T-cell (primary cell): ENCODE measurements at regions of chr3 and their contacts with region 1.

Region 1: GRCh38 chr3:39288300-39288808 is 8.5 kb upstream of the CX3CR1 start:
- DNase-seq: peak; percentile 51 to 89 (median 73)
- ATAC-seq: peak; percentile 88 to 96 (median 90)
- H3K4me3 ChIP-seq: no peak overlapping the region
- H3K4me3 Mint-ChIP-seq: no peak overlapping the region
- H3K27ac ChIP-seq: peak overlapping the region; percentile 6
- H3K27ac Mint-ChIP-seq: peak overlapping the region; percentile 50
- H3K4me1 ChIP-seq: peaks cover 0 to 20% of the 10 kb centered on the region in 2 experiments
- H3K4me1 Mint-ChIP-seq: peaks cover 23 to 35% (median 25%) of the 10 kb centered on the region in 3 donors
- H3K27me3 ChIP-seq: no peaks in the 10 kb centered on the region
- H3K27me3 Mint-ChIP-seq: no peaks in the 10 kb centered on the region

Region 2: GRCh38 chr3:39106281-39106811 is 182.0 kb before region 1 on chr3:
- CTCF ChIA-PET with region 1: interaction called, 5 to 10 read pairs
- POLR2A ChIA-PET with region 1: no interaction called
- DNase-seq: no peak
- ATAC-seq: no peak
- H3K4me3 ChIP-seq: peak overlapping the region; percentile 78 to 91
- H3K4me3 Mint-ChIP-seq: peak overlapping the region; percentile 82 to 95 (median 85)
- H3K27ac ChIP-seq: peak overlapping the region; percentile 48
- H3K27ac Mint-ChIP-seq: peak overlapping the region; percentile 88 to 92
- H3K4me1 ChIP-seq: peaks cover 7 to 38% of the 10 kb centered on the region in 2 experiments
- H3K4me1 Mint-ChIP-seq: peaks cover 60 to 71% (median 65%) of the 10 kb centered on the region in 3 donors
- H3K27me3 ChIP-seq: no peaks in the 10 kb centered on the region
- H3K27me3 Mint-ChIP-seq: no peaks in the 10 kb centered on the region

Region 3: DNA sequence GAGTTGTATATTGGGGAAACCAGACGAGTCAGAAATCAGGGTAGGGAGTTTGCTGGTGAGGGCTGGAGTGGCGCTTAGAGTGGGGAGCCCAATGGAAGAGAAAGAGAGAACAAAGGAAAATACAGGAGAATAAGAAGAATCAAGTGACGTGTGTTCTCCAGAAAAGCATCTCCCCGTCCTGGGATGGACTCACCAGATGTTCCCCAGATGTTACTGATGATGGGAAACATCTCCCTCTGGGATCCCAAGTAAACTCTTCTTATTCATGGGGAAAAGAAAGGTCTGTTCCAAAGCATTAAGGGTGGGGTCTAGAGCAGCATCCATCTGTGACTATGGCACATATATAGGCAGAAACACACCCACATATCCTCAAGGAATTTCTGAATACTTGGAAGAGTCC is 131.9 kb before region 1 on chr3:
- CTCF ChIA-PET with region 1: interaction called in 1 of 2 experiments, 4 read pairs
- POLR2A ChIA-PET with region 1: interaction called in 1 of 2 experiments, 10 read pairs
- DNase-seq: no peak
- ATAC-seq: no peak
- H3K4me3 ChIP-seq: no peak overlapping the region
- H3K4me3 Mint-ChIP-seq: no peak overlapping the region
- H3K27ac ChIP-seq: no peak overlapping the region
- H3K27ac Mint-ChIP-seq: no peak overlapping the region
- H3K4me1 ChIP-seq: peaks cover 9 to 28% of the 10 kb centered on the region in 2 experiments
- H3K4me1 Mint-ChIP-seq: peaks cover 25 to 32% (median 25%) of the 10 kb centered on the region in 3 donors
- H3K27me3 ChIP-seq: no peaks in the 10 kb centered on the region
- H3K27me3 Mint-ChIP-seq: no peaks in the 10 kb centered on the region

Region 4: DNA sequence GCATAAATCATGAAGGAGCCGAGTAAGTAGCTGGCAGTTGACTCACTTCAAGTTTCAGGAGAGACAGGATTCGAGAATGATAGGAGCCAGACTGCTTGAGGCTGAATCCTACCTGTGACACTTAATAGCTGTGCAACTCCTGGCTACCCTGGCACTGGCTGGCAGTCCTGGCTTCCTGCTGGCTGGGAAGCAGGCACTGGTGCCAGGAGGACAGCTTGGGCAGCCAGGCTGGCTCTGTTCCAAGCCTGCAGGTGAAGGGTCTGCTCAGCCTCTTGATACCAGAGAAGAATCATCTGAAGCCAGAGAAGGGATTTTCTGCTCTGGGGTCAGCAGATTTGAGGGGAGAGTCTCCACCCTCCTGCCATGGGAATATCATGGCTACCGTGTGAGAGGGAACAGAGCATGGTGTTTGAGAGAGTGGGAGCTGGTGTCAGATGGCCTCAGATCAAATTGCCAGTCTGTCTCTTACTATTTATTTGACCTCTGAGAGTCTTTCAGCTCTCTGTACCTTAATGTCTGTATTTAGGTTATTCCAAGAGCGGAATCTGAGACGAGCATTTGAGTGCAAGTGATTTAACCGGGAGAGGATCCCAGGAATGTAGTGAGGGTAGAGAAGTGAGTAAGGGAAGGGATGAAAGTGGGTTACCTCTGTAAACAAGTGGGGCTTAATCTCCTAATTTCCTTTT is 91.5 kb before region 1 on chr3:
- CTCF ChIA-PET with region 1: interaction called, 48 to 82 read pairs
- POLR2A ChIA-PET with region 1: no interaction called
- DNase-seq: no peak
- ATAC-seq: no peak
- H3K4me3 ChIP-seq: no peak overlapping the region
- H3K4me3 Mint-ChIP-seq: no peak overlapping the region
- H3K27ac ChIP-seq: no peak overlapping the region
- H3K27ac Mint-ChIP-seq: peak overlapping the region in 1 of 2 donors; percentile 20
- H3K4me1 ChIP-seq: peaks cover 0 to 2% of the 10 kb centered on the region in 2 experiments
- H3K4me1 Mint-ChIP-seq: no peaks in the 10 kb centered on the region
- H3K27me3 ChIP-seq: peaks cover 0 to 9% of the 10 kb centered on the region in 2 experiments
- H3K27me3 Mint-ChIP-seq: peaks cover 8 to 11% of the 10 kb centered on the region in 2 donors

Region 5: DNA sequence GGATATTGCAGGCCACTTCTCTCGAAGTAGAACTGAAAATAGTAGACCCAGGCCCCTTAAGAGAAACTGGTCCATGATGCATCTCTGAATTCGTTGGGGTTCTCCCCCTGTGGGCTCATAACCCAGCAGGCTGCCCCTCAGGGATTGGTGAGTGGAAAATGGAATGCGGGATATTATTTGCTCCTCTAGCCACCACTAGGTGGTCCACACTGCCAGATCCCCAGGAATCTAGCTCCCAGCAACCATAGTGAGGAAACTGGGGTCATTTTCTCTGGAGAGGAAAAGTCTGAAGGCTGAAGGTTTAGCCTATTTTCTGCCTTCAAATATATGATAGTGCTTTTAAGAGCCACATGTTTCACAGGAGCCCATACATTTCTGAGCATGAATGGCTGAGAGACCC is 15.2 kb before region 1 on chr3:
- CTCF ChIA-PET with region 1: interaction called, 10 to 18 read pairs
- POLR2A ChIA-PET with region 1: no interaction called
- DNase-seq: no peak
- ATAC-seq: no peak
- H3K4me3 ChIP-seq: no peak overlapping the region
- H3K4me3 Mint-ChIP-seq: no peak overlapping the region
- H3K27ac ChIP-seq: peak overlapping the region; percentile 27
- H3K27ac Mint-ChIP-seq: peak overlapping the region in 1 of 2 donors; percentile 46
- H3K4me1 ChIP-seq: peaks cover 2 to 66% of the 10 kb centered on the region in 2 experiments
- H3K4me1 Mint-ChIP-seq: peaks cover 13 to 49% (median 13%) of the 10 kb centered on the region in 3 donors
- H3K27me3 ChIP-seq: no peaks in the 10 kb centered on the region
- H3K27me3 Mint-ChIP-seq: no peaks in the 10 kb centered on the region

Region 6: DNA sequence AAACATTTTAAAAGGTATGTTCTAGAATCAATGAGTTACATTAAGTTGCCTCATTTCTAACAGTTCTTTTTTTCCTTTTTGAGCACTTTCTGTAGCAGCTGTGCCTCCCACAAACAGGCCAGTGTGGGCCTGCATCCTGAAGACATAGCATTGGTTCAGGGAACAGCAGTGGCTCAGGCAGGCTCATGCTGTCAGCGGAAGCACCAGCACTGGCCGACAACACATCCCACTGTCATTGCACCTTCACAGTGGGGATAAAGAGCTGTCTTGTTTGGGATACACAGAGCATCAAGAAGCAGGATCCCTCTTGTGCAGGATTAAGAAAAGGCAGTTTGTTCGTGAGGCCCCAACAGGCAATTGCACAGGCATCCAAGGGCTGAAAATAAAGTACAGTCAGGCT is 302.5 kb after region 1 on chr3:
- CTCF ChIA-PET with region 1: no interaction called
- POLR2A ChIA-PET with region 1: no interaction called
- DNase-seq: no peak
- ATAC-seq: no peak
- H3K4me3 ChIP-seq: no peak overlapping the region
- H3K4me3 Mint-ChIP-seq: no peak overlapping the region
- H3K27ac ChIP-seq: no peak overlapping the region
- H3K27ac Mint-ChIP-seq: no peak overlapping the region
- H3K4me1 ChIP-seq: no peaks in the 10 kb centered on the region
- H3K4me1 Mint-ChIP-seq: no peaks in the 10 kb centered on the region
- H3K27me3 ChIP-seq: no peaks in the 10 kb centered on the region
- H3K27me3 Mint-ChIP-seq: peaks cover 0 to 13% of the 10 kb centered on the region in 2 donors